Activated naive CD4-positive, alpha-beta T cell treated with anti-CD3 and anti-CD28 coated beads for 36 hours (primary cell): ENCODE measurements at regions of chr1 and their contacts with region 1.

Region 1: DNA sequence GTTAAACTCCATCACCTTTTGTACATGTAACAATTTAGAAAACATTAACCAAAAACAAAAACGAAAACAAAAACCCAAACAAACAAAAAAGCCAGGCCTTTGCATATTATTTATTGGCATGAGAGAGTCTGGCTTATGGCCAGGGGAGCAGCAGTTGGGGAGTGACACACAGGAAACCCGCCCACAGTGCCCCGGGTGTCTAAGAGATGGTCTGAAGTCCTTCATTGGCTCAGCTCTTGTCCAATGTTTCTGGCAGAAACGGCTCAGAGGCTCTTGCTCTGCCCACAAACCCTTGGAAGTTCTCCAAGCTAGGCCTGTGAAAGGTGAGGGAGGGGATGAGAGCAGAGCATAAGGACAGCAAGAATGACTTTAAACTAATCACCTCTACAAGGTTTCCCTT is 131.5 kb downstream of the CNIH3 start:
- DNase-seq: peak; percentile 29
- H3K4me3 Mint-ChIP-seq: no peak overlapping the region
- H3K27ac Mint-ChIP-seq: no peak overlapping the region
- H3K4me1 Mint-ChIP-seq: peaks cover 34% of the 10 kb centered on the region
- H3K27me3 Mint-ChIP-seq: peaks cover 15% of the 10 kb centered on the region

Region 2: GRCh38 chr1:224623743-224624333 is 123.7 kb before region 1 on chr1:
- CTCF ChIA-PET with region 1: no interaction called
- intact Hi-C with region 1: loop called (anchors 5 kb)
- DNase-seq: peak; percentile 92
- H3K4me3 Mint-ChIP-seq: peak overlapping the region; percentile 46
- H3K27ac Mint-ChIP-seq: peak overlapping the region; percentile 82
- H3K4me1 Mint-ChIP-seq: peaks cover 23% of the 10 kb centered on the region
- H3K27me3 Mint-ChIP-seq: peaks cover 25% of the 10 kb centered on the region

Region 3: DNA sequence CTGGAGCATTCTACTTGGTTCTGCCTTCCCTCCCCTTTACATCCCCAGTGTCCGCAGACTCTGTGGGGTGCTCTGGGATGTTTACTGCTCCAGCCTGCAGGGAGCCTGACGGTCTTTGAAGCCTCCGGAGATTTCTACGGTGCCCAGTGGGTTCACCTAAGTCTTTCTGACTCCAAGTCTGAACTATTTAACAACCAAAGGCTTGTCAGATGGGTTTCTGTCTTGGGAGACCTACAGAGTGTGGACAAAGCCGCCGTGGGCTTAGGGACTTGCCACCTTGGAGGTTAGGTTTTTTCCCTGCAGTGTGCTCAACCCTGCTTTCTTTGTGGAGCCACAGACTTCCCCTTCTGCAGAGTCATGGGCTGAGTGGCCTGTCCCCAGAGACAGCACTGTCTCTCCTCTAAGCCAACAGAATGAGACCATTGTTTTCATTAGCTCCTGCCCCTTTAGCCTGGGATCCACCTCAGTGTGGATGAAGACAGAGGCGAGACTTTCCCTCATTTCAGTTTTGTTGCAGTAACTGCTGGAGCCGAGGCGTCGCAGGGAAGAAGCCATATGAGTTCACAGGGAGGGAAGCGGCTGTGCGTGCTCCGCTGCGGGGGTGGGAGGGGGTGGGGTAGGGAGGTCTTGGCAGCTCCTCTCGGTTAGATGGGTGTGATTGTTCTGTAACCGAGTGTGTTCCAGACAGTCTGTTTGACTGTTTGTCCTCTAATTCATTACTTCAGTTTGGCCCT is 10.8 kb before region 1 on chr1:
- CTCF ChIA-PET with region 1: no interaction called
- intact Hi-C with region 1: loop called (anchors 1 kb)
- DNase-seq: peak; percentile 36
- H3K4me3 Mint-ChIP-seq: no peak overlapping the region
- H3K27ac Mint-ChIP-seq: no peak overlapping the region
- H3K4me1 Mint-ChIP-seq: peaks cover 26% of the 10 kb centered on the region
- H3K27me3 Mint-ChIP-seq: no peaks in the 10 kb centered on the region

Region 4: DNA sequence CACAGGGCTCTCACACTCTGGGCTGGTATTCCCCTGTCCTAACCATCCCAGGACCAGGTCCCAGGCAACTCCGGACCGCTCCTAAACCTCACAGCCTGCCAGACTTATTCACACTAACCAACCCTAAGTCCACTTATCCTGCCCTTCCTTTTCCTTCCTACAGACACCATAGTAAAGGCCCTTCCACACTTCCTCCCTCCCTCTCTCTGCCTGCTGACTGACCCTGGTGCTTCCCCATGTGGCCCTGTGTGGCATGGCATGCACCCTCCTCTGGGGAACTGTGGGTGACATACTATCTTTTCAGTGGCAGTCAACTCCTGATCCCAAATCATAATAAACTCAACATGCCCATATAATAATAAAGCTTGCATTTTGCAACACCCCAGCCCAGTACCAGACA is 26.8 kb after region 1 on chr1:
- CTCF ChIA-PET with region 1: no interaction called
- intact Hi-C with region 1: no loop called
- DNase-seq: no peak
- H3K4me3 Mint-ChIP-seq: no peak overlapping the region
- H3K27ac Mint-ChIP-seq: no peak overlapping the region
- H3K4me1 Mint-ChIP-seq: no peaks in the 10 kb centered on the region
- H3K27me3 Mint-ChIP-seq: peaks cover 3% of the 10 kb centered on the region

Region 5: GRCh38 chr1:224939844-224940425 is 192.4 kb after region 1 on chr1:
- CTCF ChIA-PET with region 1: no interaction called
- intact Hi-C with region 1: no loop called
- DNase-seq: no peak
- H3K4me3 Mint-ChIP-seq: no peak overlapping the region
- H3K27ac Mint-ChIP-seq: no peak overlapping the region
- H3K4me1 Mint-ChIP-seq: no peaks in the 10 kb centered on the region
- H3K27me3 Mint-ChIP-seq: peaks cover 3% of the 10 kb centered on the region